ENCODE measurements at regions of chr1 and their contacts with region 1.

Region 1: DNA sequence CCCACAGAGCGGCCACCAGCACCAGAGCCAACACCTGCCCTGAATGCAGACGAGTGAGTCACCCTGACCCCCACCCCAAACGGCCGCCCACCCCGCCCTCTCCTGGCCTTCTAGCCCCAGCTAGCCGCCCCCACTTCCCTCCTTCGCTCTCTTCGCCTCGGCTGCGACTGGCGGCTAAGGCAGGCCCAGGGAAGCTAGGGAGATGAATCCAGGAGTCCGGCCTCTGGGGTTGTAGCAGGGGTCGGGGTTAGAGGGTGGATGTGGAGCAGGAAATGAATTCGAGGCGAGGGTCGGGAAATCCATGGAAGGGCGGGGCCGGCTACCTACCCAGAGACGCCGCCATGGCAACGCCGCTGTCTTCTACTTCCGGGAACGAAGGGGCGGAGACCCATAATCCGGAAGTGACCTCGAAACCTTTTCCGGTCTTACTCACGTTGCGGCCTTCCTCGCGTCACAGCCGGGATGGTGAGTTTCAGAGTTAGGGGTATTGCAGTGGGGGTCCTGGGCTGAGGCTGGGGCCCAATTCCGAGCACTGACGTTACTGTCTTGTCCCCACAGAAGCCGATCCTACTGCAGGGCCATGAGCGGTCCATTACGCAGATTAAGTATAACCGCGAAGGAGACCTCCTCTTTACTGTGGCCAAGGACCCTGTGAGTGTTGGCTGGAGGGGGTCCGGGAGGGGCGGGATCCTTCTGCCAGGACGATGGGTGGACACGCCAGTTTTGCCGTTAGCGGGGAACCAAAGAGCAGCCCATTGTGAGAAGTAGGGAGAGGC is at the starts of genes EIF3I and TMEM234:
- DNase-seq: peak; percentile 96
- H3K4me3 Mint-ChIP-seq: peak within 1 kb of the TSS; percentile 95
- H3K27ac Mint-ChIP-seq: peak within 1 kb of the TSS; percentile 94
- H3K4me1 Mint-ChIP-seq: peaks cover 38% of the 10 kb centered on the region
- H3K27me3 Mint-ChIP-seq: no peaks in the 10 kb centered on the region
- total RNA-seq, gene EIF3I: 297 to 299 TPM
- total RNA-seq, gene TMEM234: 7.8 to 9.9 TPM

Region 2: GRCh38 chr1:32179443-32180185 is 42.6 kb before region 1 on chr1 and contains the start of gene TXLNA:
- CTCF ChIA-PET with region 1: no interaction called
- POLR2A ChIA-PET with region 1: interaction called, 5 read pairs
- intact Hi-C with region 1: loop called (anchors 2 kb)
- DNase-seq: peak; percentile 95
- H3K4me3 Mint-ChIP-seq: peak within 1 kb of the TSS; percentile 91
- H3K27ac Mint-ChIP-seq: peak within 1 kb of the TSS; percentile 96
- H3K4me1 Mint-ChIP-seq: peaks cover 38% of the 10 kb centered on the region
- H3K27me3 Mint-ChIP-seq: no peaks in the 10 kb centered on the region
- total RNA-seq, gene TXLNA: 77.4 to 78.2 TPM

Region 3: DNA sequence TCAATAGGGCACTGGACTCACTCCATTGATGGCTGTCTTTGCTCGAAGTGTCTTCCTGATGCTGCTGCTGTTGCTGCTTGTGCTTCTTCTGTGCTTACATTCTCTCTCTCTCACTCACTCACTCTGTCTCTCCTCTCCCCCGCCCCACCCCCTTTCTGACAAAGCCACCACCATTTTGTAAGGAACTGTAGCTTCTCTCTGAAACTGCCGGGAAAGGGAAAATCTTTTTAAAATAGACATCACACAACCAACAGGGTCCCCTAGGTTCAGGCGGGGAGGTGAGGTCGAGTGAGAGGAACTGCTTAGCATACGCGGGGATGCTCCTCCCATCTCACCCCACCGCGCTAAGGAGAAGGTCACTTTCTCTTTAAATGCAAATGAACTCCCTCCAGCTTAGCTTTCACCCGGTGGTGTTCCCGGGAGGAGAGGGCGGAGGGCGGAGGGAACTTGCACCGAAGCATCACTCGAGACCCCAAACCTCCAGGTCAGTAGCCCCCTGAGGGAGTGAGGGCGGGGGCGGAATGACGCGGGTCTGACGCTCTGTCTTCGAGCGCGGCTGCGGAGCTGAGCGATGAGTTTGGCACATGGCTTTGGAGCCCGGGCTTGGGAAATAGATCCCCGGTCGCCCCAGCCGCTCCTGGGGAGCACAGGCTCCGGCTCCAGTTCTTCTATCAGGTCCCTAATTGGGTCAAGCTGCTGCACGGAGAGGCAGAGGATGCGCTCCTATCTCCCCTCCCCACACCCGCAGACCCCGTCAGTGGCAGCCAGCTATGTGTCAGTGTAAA is 21.8 kb before region 1 on chr1 and contains the start of gene CCDC28B:
- CTCF ChIA-PET with region 1: no interaction called
- POLR2A ChIA-PET with region 1: no interaction called
- intact Hi-C with region 1: loop called (anchors 2 kb)
- DNase-seq: peak; percentile 67
- H3K4me3 Mint-ChIP-seq: peak within 1 kb of the TSS; percentile 81
- H3K27ac Mint-ChIP-seq: peak within 1 kb of the TSS; percentile 80
- H3K4me1 Mint-ChIP-seq: peaks cover 51% of the 10 kb centered on the region
- H3K27me3 Mint-ChIP-seq: no peaks in the 10 kb centered on the region
- total RNA-seq, gene CCDC28B: 13.4 to 14.8 TPM

Region 4: DNA sequence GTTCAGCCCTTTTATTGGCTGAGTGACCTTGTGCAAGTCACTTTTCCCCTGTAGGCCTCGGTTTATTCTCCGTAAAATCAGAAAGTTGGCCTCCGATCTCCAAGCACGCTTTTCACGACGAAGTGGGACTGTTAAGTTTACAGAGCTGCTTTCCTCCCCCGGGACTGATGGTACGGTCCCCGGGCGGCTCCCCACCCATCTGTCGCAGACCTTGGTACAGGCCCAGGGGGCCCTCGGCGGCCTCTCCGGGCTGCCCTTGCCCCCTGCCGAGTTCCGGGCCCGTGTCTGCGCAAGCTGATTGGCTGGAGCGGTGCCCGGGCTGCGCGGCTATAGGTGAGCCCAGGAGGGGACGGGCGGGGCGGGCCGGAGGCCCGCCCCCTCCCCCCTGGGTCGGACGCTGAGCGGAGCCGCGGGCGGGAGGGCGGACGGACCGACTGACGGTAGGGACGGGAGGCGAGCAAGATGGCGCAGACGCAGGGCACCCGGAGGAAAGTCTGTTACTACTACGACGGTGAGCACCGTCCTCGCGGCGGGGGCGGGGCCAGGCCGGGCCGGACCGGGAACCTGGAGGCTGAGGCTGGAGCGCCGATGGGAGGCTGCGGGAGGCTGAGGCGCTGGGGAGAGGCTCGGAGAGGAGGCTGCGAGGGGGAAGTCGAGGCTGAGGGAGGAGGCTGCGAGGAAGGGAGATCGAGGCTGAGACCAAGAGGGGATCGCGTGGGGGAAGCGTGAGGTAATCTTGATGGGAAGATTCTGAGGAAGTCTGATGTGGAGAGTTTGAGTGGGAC is 69.7 kb after region 1 on chr1 and contains the start of gene HDAC1:
- CTCF ChIA-PET with region 1: no interaction called
- POLR2A ChIA-PET with region 1: no interaction called
- intact Hi-C with region 1: loop called (anchors 2 kb)
- DNase-seq: peak; percentile 98
- H3K4me3 Mint-ChIP-seq: peak within 1 kb of the TSS; percentile 100
- H3K27ac Mint-ChIP-seq: peak within 1 kb of the TSS; percentile 93
- H3K4me1 Mint-ChIP-seq: peaks cover 46% of the 10 kb centered on the region
- H3K27me3 Mint-ChIP-seq: no peaks in the 10 kb centered on the region
- total RNA-seq, gene HDAC1: 136 to 139 TPM

Region 5: GRCh38 chr1:32394141-32394889 is 172.1 kb after region 1 on chr1 and contains the start of gene BSDC1:
- CTCF ChIA-PET with region 1: interaction called, 3 read pairs
- POLR2A ChIA-PET with region 1: no interaction called
- intact Hi-C with region 1: loop called (anchors 2 kb)
- DNase-seq: peak; percentile 99
- H3K4me3 Mint-ChIP-seq: peak within 1 kb of the TSS; percentile 94
- H3K27ac Mint-ChIP-seq: peak within 1 kb of the TSS; percentile 90
- H3K4me1 Mint-ChIP-seq: peaks cover 22% of the 10 kb centered on the region
- H3K27me3 Mint-ChIP-seq: no peaks in the 10 kb centered on the region
- total RNA-seq, gene BSDC1: 32.1 to 33.2 TPM

Measured in activated CD4-positive, alpha-beta memory T cell treated with anti-CD3 and anti-CD28 coated beads for 36 hours (primary cell).